Posterior cingulate gyrus (tissue), 11 donors: ENCODE measurements at regions of chr10 and their contacts with region 1.

Region 1: GRCh38 chr10:5977471-5978229 is at the start of gene IL15RA:
- DNase-seq: peak in 7 of 10 donors; percentile 14 to 88 (median 45)

Region 2: GRCh38 chr10:5948999-5949759 is 28.5 kb before region 1 on chr10:
- intact Hi-C with region 1: loop called (anchors 2 kb)
- DNase-seq: peak; percentile 60 to 95 (median 74)

Region 3: DNA sequence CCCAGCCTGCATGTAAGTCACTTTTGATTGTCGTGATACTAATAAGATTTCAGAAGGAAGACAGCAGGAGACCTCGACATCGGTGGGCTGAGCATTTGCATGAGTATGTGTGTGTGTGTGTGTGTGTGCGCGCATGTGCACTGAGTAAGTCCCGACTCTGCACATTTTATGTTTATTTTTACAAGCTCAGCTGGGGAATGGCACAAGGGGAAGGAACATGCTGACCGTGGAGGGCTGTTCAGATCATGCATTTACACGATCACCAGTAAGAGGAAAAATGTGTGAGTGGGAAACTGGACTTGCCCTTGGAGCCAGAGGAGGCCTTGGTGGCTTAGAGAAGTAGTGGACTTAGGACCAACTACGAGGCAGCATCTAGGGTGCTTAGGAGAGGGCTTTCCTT is 43.2 kb after region 1 on chr10:
- intact Hi-C with region 1: no loop called
- DNase-seq: peak in 1 of 10 donors; percentile 49